ENCODE measurements at regions of chr9 and their contacts with region 1.

Region 1: DNA sequence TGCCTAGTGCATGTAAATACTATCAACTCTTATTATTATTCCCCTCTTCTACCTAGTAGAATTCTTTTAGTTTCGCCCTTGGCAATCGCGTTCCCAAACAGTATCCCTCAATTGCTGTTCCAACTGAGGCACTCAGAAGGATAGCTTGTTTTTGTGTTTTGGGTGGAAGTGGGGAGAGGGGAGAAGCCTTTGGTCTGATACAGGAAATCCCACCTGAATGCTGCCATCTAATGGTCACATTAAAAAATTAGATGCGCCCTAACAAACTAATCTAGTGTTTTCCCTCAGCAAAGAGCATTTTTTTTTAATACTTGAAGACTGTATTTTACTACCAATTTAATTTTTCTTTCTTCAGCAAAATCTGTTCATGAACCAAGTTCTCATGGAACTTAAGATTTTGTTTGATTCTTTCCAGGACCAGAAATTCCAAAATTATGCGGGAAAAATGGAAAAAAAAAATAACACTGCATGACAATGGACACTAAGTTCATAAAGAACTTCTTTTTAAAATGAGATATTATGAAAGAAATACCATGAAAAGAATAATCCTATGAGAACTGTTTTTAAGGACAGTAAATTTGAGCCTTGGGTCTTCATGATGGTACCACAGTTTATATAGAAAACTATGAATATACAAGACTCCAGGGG is 22.2 kb upstream of the GLDC start:
- DNase-seq: no peak
- H3K4me3 ChIP-seq: no peak overlapping the region
- H3K27ac ChIP-seq: no peak overlapping the region
- H3K4me1 ChIP-seq: no peaks in the 10 kb centered on the region
- H3K27me3 ChIP-seq: no peaks in the 10 kb centered on the region
- CTCF ChIP-seq: peak; percentile 13 to 53 (median 36)
- POLR2A ChIP-seq: no peak

Region 2: GRCh38 chr9:6479959-6480358 is 187.8 kb before region 1 on chr9:
- intact Hi-C with region 1: no loop called
- DNase-seq: no peak
- H3K4me3 ChIP-seq: no peak overlapping the region
- H3K27ac ChIP-seq: no peak overlapping the region
- H3K4me1 ChIP-seq: no peaks in the 10 kb centered on the region
- H3K27me3 ChIP-seq: no peaks in the 10 kb centered on the region
- CTCF ChIP-seq: no peak
- POLR2A ChIP-seq: no peak

Region 3: GRCh38 chr9:6584881-6585597 is 82.7 kb before region 1 on chr9:
- intact Hi-C with region 1: loop called (anchors 10 kb)
- DNase-seq: no peak
- H3K4me3 ChIP-seq: no peak overlapping the region
- H3K27ac ChIP-seq: no peak overlapping the region
- H3K4me1 ChIP-seq: no peaks in the 10 kb centered on the region
- H3K27me3 ChIP-seq: no peaks in the 10 kb centered on the region
- CTCF ChIP-seq: peak in 5 of 6 experiments; percentile 21 to 62 (median 42)
- POLR2A ChIP-seq: no peak